Testis (tissue), 5 donors: ENCODE measurements at regions of chr15 and their contacts with region 1.

Region 1: GRCh38 chr15:66196602-66197001 is 56.9 kb downstream of the MEGF11 start:
- DNase-seq: no peak
- H3K4me3 ChIP-seq: no peak overlapping the region
- H3K27ac ChIP-seq: no peak overlapping the region
- H3K4me1 ChIP-seq: no peaks in the 10 kb centered on the region
- H3K27me3 ChIP-seq: no peaks in the 10 kb centered on the region
- CTCF ChIP-seq: no peak
- POLR2A ChIP-seq: no peak

Region 2: GRCh38 chr15:65336493-65337455 is 859.8 kb before region 1 on chr15:
- intact Hi-C with region 1: loop called (anchors 10 kb)
- DNase-seq: no peak
- H3K4me3 ChIP-seq: no peak overlapping the region
- H3K27ac ChIP-seq: no peak overlapping the region
- H3K4me1 ChIP-seq: peaks cover 3% of the 10 kb centered on the region
- H3K27me3 ChIP-seq: no peaks in the 10 kb centered on the region
- CTCF ChIP-seq: no peak
- POLR2A ChIP-seq: no peak